Activated CD4-positive, alpha-beta T cell treated with anti-CD3 and anti-CD28 coated beads, Interleukin-2, amount 10 ng/mL, durations not matched to agents 24 days and 14 days (primary cell): ENCODE measurements at regions of chr22 and their contacts with region 1.

Region 1: DNA sequence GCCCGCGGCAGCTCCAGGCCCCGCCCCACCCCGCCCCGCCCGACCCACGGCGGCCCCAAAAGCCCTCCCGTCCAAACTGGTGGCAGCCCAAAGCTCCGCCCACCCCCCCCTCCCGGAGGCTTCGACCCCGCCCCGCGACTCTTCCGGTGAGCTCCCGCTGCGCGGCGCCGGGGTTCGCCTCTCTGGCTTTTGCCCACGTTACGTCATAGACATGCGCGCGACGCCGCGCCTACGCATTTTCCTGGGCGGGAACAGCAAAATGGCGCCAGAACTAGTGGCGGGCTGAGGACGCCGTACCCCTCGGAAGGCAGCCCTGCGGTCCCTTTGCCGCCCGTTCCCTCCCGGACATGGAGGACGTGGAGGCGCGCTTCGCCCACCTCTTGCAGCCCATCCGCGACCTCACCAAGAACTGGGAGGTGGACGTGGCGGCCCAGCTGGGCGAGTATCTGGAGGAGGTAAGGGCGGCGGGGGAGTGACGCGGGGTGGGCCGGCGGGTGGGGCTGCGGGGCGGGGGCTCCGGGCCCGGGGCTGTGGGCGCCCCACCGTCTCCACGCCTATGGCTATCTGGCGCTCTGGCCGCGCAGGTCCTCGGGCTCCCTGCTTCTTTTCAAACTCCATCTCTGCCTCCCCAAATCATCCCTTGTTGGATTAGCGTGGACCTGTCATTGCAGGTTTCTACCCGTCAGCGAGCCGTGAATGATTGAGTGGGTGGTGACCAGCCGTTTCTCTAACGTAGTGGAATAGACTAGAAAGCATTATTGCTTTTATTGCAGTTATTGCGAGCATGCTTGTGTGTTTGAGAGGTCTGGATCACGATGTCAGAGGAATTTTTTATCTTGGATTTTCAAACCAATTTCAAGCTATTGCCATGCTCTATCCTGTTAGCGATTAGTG is at the start of gene NCAPH2:
- DNase-seq: peak; percentile 100
- H3K4me3 Mint-ChIP-seq: peak within 1 kb of the TSS; percentile 90
- H3K27ac Mint-ChIP-seq: peak within 1 kb of the TSS; percentile 97
- H3K4me1 Mint-ChIP-seq: peaks cover 17% of the 10 kb centered on the region
- H3K27me3 Mint-ChIP-seq: peaks cover 1% of the 10 kb centered on the region
- total RNA-seq, gene NCAPH2: 131 and 133 TPM in 2 replicates

Region 2: GRCh38 chr22:50250555-50251476 is 257.4 kb before region 1 on chr22 and contains the start of gene HDAC10:
- intact Hi-C with region 1: loop called (anchors 5 kb)
- DNase-seq: peak; percentile 96
- H3K4me3 Mint-ChIP-seq: peak within 1 kb of the TSS; percentile 84
- H3K27ac Mint-ChIP-seq: peak within 1 kb of the TSS; percentile 80
- H3K4me1 Mint-ChIP-seq: peaks cover 3% of the 10 kb centered on the region
- H3K27me3 Mint-ChIP-seq: no peaks in the 10 kb centered on the region
- total RNA-seq, gene HDAC10: 62.2 and 64.6 TPM in 2 replicates

Region 3: GRCh38 chr22:50452649-50453048 is 55.6 kb before region 1 on chr22:
- intact Hi-C with region 1: loop called (anchors 5 kb)
- DNase-seq: no peak
- H3K4me3 Mint-ChIP-seq: no peak overlapping the region
- H3K27ac Mint-ChIP-seq: peak overlapping the region; percentile 54
- H3K4me1 Mint-ChIP-seq: peaks cover 13% of the 10 kb centered on the region
- H3K27me3 Mint-ChIP-seq: no peaks in the 10 kb centered on the region

Region 4: GRCh38 chr22:50525390-50526068 is 17.3 kb after region 1 on chr22 and contains the start of gene SCO2:
- intact Hi-C with region 1: loop called (anchors 1 kb)
- DNase-seq: peak; percentile 99
- H3K4me3 Mint-ChIP-seq: peak within 1 kb of the TSS; percentile 90
- H3K27ac Mint-ChIP-seq: peak within 1 kb of the TSS; percentile 88
- H3K4me1 Mint-ChIP-seq: peaks cover 32% of the 10 kb centered on the region
- H3K27me3 Mint-ChIP-seq: no peaks in the 10 kb centered on the region
- total RNA-seq, gene SCO2: 5.3 and 11.2 TPM in 2 replicates

Region 5: DNA sequence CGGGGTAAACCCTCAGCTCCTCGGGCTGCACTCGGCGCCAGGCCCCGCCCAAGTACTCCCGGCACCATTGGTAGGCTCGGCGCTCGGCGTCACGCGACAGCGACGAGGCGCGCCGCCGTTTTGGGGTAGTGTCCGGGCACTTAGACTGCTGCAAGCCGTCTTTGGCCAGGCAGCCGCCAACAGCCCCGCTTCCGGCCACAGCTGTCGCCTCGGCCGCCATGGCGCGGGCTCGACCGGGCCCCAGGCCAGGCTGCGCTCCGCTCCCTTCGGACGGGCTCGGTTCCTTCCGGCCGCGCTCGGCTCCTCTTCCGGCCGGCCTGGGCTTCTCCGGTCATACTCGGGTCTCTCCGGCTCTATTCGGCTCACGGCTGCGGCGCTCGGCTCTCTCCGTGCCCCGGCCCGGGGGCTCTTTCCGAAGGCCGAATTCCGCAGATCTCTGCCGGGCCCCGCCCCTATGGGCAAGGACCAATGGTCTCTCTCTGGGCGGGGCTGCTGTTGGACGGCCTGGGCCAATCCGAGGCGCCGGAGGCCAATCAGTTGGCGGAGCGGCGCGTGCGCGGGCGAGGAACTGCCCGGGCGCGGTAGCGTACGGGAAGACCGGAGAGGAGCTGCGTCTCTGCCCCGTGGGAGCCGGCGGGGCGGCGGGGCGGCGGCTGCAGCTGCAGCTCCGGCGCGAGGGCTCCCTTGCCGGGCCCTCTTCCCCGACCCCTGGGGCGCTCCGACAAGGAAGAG is 74.5 kb after region 1 on chr22 and contains the start of gene CHKB:
- intact Hi-C with region 1: loop called (anchors 1 kb)
- DNase-seq: peak; percentile 100
- H3K4me3 Mint-ChIP-seq: peak within 1 kb of the TSS; percentile 93
- H3K27ac Mint-ChIP-seq: peak within 1 kb of the TSS; percentile 93
- H3K4me1 Mint-ChIP-seq: peaks cover 14% of the 10 kb centered on the region
- H3K27me3 Mint-ChIP-seq: no peaks in the 10 kb centered on the region
- total RNA-seq, gene CHKB: 83.2 and 84.7 TPM in 2 replicates